HCT116 (cell line): ENCODE measurements at regions of chr20 and their contacts with region 1.

Region 1: DNA sequence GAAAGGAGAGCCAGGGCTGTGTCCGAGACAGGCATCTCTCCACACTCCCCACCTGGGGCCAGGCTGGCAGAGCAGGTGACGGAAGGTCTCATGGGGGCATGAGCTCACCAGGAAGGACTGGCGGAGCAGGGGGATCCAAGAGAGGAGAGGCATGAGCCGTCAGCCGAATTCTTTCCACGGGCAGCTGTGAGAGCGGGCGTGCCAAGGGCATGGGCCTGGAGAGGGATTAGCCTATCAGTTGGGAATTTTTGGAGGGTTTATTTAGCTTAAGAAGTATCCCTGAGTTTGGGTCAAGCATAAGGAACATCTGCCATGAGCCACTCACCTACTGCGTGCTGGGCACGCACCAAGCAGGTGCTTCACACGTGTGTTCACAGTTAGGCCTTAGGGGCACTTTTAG is 60.2 kb upstream of the ZNFX1 start:
- DNase-seq: no peak
- ATAC-seq: no peak
- H3K4me3 ChIP-seq: no peak overlapping the region
- H3K27ac ChIP-seq: no peak overlapping the region
- H3K4me1 ChIP-seq: no peaks in the 10 kb centered on the region
- H3K27me3 ChIP-seq: no peaks in the 10 kb centered on the region
- CTCF ChIP-seq: no peak
- POLR2A ChIP-seq: no peak
- RAD21 ChIP-seq: no peak

Region 2: DNA sequence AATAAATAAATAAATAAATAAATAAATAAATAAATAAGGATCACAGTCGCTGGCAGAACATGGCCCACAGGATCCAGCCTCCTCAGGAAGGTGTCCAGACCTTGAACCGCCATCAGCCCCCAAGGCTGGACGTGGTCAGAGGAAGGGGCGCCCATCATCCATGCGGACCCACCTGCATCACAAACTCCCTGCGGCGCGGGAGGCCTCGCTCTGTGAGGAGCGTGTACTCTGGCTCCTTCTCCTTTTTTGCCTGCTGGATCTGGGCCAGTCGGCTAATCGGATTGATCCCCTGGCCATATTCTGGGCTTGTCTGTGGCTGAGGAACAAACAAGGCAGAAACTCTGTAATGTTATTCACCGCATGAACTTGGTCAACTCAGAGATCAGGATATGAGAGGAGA is 215.1 kb before region 1 on chr20:
- CTCF ChIA-PET with region 1: no interaction called
- POLR2A ChIA-PET with region 1: no interaction called
- RAD21 ChIA-PET with region 1: no interaction called
- intact Hi-C with region 1: no loop called
- DNase-seq: no peak
- ATAC-seq: no peak
- H3K4me3 ChIP-seq: no peak overlapping the region
- H3K27ac ChIP-seq: no peak overlapping the region
- H3K4me1 ChIP-seq: no peaks in the 10 kb centered on the region
- H3K27me3 ChIP-seq: no peaks in the 10 kb centered on the region
- CTCF ChIP-seq: no peak
- POLR2A ChIP-seq: no peak
- RAD21 ChIP-seq: no peak

Region 3: DNA sequence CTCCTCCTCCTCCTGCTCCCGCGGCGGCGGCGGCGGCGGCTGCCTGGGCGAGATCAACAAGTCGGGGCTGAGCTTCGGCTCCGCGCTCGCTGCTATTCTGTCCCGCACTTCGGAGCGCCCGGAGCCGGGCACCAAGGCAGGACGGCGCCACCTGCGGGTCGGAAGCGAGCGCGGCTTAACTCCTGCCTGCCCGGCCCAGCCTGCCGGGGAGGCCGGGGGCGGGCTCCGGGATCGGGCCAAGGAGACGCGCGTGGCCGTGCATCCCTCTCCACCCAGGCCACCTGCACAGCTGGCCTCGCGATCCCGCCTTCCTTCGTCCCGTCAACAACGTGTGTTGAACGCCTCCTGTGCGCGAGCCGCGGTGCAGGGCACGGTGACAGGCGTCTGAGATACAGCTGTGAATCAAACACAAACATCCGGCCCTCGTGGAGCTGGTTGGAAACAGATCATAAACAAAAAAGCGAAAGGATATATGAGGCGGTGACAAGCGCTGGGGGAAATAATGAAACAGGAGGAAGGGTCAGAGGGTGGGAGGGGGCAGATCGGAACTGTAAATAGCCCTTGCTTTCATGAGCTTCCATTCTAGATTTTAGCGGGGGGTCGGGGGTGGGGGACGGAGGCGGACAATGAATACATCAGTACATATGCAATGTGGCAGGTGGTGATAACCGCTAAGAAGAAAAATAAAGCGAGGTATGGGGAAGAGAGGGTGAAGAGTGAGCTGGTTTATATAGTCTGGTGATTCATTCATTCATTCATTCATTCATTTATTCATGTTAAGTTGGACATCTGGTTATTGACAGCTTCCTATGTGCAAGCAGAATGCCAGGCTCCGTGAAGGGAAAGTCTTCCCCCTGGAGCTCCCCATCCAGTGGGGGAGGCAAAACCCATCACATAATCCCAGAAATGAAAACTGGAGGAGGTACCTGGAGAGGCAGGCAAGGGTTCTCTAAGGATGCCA is 146.4 kb after region 1 on chr20:
- CTCF ChIA-PET with region 1: interaction called, 20 read pairs
- POLR2A ChIA-PET with region 1: no interaction called
- RAD21 ChIA-PET with region 1: interaction called, 5 to 7 read pairs
- intact Hi-C with region 1: loop called (anchors 1 kb)
- DNase-seq: peak; percentile 31
- ATAC-seq: peak; percentile 98
- H3K4me3 ChIP-seq: peak overlapping the region; percentile 32 to 56
- H3K27ac ChIP-seq: no peak overlapping the region
- H3K4me1 ChIP-seq: peaks cover 0 to 10% of the 10 kb centered on the region in 2 experiments; a peak in 1 of 4 replicates
- H3K27me3 ChIP-seq: peaks cover 24% of the 10 kb centered on the region; the same call in 1 of the 2 replicates
- CTCF ChIP-seq: peak; percentile 61 to 86 (median 81)
- POLR2A ChIP-seq: no peak
- RAD21 ChIP-seq: peak; percentile 79

Region 4: DNA sequence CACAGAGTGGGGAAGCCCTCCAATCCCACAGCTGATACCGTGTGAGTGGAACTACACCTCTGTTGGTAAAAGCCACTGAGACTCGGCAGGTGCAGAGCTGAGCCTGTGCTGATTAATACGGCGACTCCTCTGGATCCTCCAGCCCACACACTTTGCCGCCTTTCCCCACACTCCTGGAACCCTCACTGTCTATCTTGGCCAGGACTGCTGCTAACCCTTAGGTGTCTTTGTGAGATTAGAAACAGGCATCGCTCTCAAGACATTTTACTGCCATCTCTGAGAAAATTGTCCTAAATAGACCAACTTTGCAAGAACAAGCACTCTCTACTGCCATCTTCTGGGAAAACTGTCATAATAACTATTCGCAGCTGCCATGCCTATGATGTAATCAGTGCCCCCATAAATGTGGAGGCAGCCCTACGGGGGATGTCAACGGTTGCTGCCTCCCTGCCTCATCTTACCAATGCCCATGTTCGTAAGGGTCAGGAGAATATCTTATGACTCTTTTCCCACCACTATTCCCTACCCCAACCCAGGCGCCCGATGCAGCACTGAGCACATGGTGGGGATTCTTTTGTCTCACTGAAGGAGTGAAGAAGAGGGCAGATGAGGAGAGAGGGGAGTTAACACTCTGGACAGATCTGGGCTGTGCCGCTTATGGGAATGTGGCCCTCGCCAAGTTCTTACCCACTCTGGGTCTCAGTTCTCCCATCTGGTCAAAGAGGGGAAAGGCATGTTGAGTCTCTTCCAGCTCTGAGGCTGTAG is 170.6 kb after region 1 on chr20:
- CTCF ChIA-PET with region 1: interaction called, 7 read pairs
- POLR2A ChIA-PET with region 1: no interaction called
- RAD21 ChIA-PET with region 1: interaction called in 1 of 2 experiments, 4 read pairs
- intact Hi-C with region 1: loop called (anchors 1 kb)
- DNase-seq: peak; percentile 28
- ATAC-seq: peak; percentile 84
- H3K4me3 ChIP-seq: 0 out of 4 replicates have a peak overlapping the region, but pooled peaks of 1 of the 2 experiments have one; percentile 9
- H3K27ac ChIP-seq: no peak overlapping the region
- H3K4me1 ChIP-seq: peaks cover 0 to 4% of the 10 kb centered on the region in 2 experiments; a peak in 1 of 4 replicates
- H3K27me3 ChIP-seq: peaks cover 21% of the 10 kb centered on the region
- CTCF ChIP-seq: peak; percentile 41 to 79 (median 66)
- POLR2A ChIP-seq: no peak
- RAD21 ChIP-seq: peak; percentile 68

Region 5: DNA sequence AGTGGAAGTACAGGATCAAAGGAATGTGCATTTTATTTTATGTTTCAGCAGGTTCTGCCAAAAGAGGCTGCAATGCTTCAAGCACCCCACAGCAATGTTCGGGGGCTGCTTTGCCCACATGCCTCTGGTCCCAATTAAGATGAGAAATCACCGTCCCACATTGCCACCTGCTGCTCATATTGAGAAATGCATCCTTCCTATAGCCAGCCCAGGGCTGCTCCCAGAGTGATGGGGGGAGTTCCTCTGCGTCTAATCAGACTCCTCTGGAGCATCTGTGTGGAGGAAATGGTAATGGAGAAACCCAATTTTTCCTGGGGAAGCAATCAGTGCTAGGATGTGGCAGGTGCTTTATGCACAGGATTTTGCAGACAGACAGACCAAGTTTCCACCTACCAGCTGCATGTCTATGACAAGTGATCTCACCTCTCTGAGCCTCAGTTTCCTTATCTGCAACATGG is 196.2 kb after region 1 on chr20:
- CTCF ChIA-PET with region 1: interaction called, 4 read pairs
- POLR2A ChIA-PET with region 1: no interaction called
- RAD21 ChIA-PET with region 1: no interaction called
- intact Hi-C with region 1: loop called (anchors 1 kb)
- DNase-seq: peak; percentile 48
- ATAC-seq: peak; percentile 92
- H3K4me3 ChIP-seq: no peak overlapping the region
- H3K27ac ChIP-seq: no peak overlapping the region
- H3K4me1 ChIP-seq: no peaks in the 10 kb centered on the region; a peak in 1 of 4 replicates
- H3K27me3 ChIP-seq: peaks cover 3% of the 10 kb centered on the region; the same call in 1 of the 2 replicates
- CTCF ChIP-seq: peak; percentile 82 to 95 (median 84)
- POLR2A ChIP-seq: no peak
- RAD21 ChIP-seq: peak; percentile 81

Region 6: GRCh38 chr20:49846206-49846807 is 508.2 kb after region 1 on chr20:
- CTCF ChIA-PET with region 1: no interaction called
- POLR2A ChIA-PET with region 1: no interaction called
- RAD21 ChIA-PET with region 1: no interaction called
- intact Hi-C with region 1: loop called (anchors 10 kb)
- DNase-seq: peak; percentile 16
- ATAC-seq: peak; percentile 90
- H3K4me3 ChIP-seq: no peak overlapping the region
- H3K27ac ChIP-seq: no peak overlapping the region
- H3K4me1 ChIP-seq: no peaks in the 10 kb centered on the region
- H3K27me3 ChIP-seq: no peaks in the 10 kb centered on the region
- CTCF ChIP-seq: peak; percentile 51 to 82 (median 65)
- POLR2A ChIP-seq: no peak
- RAD21 ChIP-seq: peak; percentile 82